ENCODE measurements at regions of chr11 and their contacts with region 1.

Region 1: DNA sequence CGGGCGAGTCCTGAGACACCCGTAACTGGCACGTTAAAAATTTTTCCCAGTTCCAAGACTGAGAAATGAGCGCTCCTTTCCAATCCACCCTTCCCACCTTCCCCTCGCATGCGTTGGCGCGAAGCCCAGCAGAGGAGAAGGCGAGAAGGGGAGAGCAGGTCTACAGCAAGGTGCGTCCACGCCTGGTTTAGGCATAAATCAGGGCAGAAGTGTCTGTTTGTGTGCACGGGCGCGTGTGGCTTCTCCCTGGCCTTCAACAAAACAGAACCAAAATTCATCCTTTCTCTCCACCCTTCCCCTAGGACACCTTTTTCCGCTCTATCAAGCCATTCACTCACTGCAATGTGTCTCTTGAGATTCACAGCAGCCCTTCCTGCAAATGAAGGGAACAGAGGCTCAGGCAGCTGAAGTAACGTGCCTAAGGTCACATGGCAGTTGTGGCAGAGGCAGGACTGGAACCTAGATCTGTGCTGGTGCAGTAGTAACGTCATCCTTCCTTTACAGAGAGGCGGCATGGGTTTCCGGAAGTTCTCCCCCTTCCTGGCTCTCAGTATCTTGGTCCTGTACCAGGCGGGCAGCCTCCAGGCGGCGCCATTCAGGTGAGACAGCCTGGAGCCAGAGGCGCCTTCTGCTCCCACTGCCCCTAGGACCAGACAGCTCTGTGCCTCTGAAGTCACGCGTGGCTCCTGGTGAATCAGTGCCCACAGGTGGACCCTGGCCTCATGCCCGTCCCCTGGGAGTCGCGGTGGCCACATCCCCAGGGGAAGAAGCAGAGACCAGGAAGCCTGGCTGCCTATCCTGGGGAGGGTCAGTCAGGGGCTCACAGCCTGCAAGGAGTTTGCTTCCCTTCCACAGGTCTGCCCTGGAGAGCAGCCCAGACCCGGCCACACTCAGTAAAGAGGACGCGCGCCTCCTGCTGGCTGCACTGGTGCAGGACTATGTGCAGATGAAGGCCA is 1.1 kb downstream of the CALCB start:
- DNase-seq: peak; percentile 69 to 89 (median 77)
- ATAC-seq: peak; percentile 90 to 95 (median 92)
- H3K4me3 ChIP-seq: peak overlapping the region; percentile 2 to 43 (median 33)
- H3K27ac ChIP-seq: no peak overlapping the region
- H3K4me1 ChIP-seq: peaks cover 0 to 21% (median 13%) of the 10 kb centered on the region in 12 donors
- H3K27me3 ChIP-seq: peaks cover 9 to 56% (median 33%) of the 10 kb centered on the region in 9 donors
- CTCF ChIP-seq: peak; percentile 56 to 79 (median 66)
- POLR2A ChIP-seq: no peak

Region 2: DNA sequence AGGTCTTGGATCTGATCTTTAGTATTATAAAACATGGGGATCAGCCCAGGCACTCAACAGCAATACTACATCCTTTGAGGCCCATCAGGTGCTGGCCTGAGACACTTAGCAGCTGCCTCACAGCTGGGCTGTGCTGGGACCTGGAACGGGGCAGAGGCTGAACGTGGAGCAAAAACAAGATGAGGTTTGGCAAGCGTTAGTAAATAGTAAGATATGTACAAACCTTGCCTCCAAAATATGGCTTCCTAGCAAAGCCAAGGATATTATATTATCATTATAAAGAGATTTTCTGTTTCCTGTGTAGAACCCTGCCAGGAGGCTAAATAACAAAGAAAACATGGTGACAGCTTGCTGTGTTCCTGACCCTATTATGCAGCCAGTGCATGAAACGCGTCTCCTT is 1172.0 kb before region 1 on chr11:
- intact Hi-C with region 1: no loop called
- DNase-seq: peak in 1 of 5 donors; percentile 31
- ATAC-seq: peak in 3 of 4 donors; percentile 50 to 73 (median 57)
- H3K4me3 ChIP-seq: no peak overlapping the region
- H3K27ac ChIP-seq: no peak overlapping the region
- H3K4me1 ChIP-seq: no peaks in the 10 kb centered on the region
- H3K27me3 ChIP-seq: no peaks in the 10 kb centered on the region
- CTCF ChIP-seq: no peak
- POLR2A ChIP-seq: no peak

Region 3: GRCh38 chr11:14529933-14530332 is 544.6 kb before region 1 on chr11:
- intact Hi-C with region 1: loop called in 5 of 10 experiments (anchors 5 to 10 kb)
- DNase-seq: no peak
- ATAC-seq: no peak
- H3K4me3 ChIP-seq: no peak overlapping the region
- H3K27ac ChIP-seq: no peak overlapping the region
- H3K4me1 ChIP-seq: no peaks in the 10 kb centered on the region
- H3K27me3 ChIP-seq: no peaks in the 10 kb centered on the region
- CTCF ChIP-seq: no peak
- POLR2A ChIP-seq: no peak

Region 4: DNA sequence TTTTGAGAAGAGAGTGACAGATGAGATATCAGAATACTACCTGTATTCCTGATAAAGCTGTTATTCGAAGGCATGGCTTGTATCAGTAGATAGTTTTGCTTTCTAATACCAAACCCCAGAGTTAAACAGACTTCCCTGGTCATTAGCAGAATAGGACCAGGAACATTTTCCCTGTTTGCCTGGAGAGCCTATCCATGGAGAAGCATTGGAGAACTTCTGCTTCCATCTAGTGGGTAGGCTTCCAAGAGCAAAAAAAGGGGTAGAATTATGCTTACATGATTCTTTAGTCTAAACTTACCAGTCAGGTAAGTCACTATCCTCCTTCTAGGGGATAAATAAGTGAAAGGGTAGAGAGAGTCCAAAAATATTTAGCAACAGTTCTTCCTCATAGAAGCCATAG is 416.6 kb before region 1 on chr11:
- intact Hi-C with region 1: no loop called
- DNase-seq: no peak
- ATAC-seq: peak in 1 of 4 donors; percentile 37
- H3K4me3 ChIP-seq: no peak overlapping the region
- H3K27ac ChIP-seq: peak overlapping the region in 1 of 12 donors; percentile 60
- H3K4me1 ChIP-seq: peaks cover 0 to 23% (median 3%) of the 10 kb centered on the region in 12 donors
- H3K27me3 ChIP-seq: no peaks in the 10 kb centered on the region
- CTCF ChIP-seq: peak in 2 of 12 donors; percentile 6 to 9
- POLR2A ChIP-seq: no peak

Region 5: GRCh38 chr11:14764579-14765527 is 309.6 kb before region 1 on chr11:
- intact Hi-C with region 1: no loop called
- DNase-seq: no peak
- ATAC-seq: no peak
- H3K4me3 ChIP-seq: no peak overlapping the region
- H3K27ac ChIP-seq: peak overlapping the region in 1 of 12 donors; percentile 40
- H3K4me1 ChIP-seq: peaks cover 0 to 5% (median 0%) of the 10 kb centered on the region in 12 donors
- H3K27me3 ChIP-seq: no peaks in the 10 kb centered on the region
- CTCF ChIP-seq: no peak
- POLR2A ChIP-seq: no peak

Region 6: DNA sequence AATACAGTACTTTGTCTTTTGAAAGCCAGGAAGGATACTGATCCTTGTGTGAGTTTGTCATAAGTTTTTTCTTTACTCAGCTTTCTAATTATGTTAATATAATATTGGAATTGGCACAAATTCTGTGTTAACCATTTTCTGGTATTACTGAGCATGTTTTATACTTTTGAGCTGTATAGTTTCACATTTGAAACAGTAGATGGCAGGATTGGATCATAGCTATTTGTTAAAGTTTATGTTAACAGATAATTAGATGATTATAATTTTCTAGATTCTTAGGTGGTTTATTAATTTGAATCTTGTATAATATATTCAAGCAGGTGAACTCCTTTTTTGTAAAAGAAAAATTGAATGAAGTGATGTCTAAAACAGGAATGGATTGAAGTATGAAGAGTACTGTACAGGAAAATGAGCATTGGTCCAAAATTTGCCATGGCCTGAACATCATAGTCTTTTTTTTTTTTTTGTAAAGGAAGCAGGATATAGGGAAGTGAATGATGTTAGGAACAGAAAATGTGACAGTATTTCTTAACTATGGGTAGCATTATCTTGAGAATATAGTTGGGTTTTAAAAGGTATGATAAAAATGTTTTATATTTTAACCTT is 284.5 kb before region 1 on chr11:
- intact Hi-C with region 1: loop called in 1 of 10 experiments (anchors 10 kb)
- DNase-seq: no peak
- ATAC-seq: no peak
- H3K4me3 ChIP-seq: no peak overlapping the region
- H3K27ac ChIP-seq: no peak overlapping the region
- H3K4me1 ChIP-seq: peaks cover 0 to 8% (median 0%) of the 10 kb centered on the region in 12 donors
- H3K27me3 ChIP-seq: no peaks in the 10 kb centered on the region
- CTCF ChIP-seq: peak; percentile 23 to 58 (median 36)
- POLR2A ChIP-seq: no peak

Region 7: GRCh38 chr11:14927146-14927545 is 147.3 kb before region 1 on chr11:
- intact Hi-C with region 1: loop called in 1 of 10 experiments (anchors 5 kb)
- DNase-seq: no peak
- ATAC-seq: no peak
- H3K4me3 ChIP-seq: no peak overlapping the region
- H3K27ac ChIP-seq: no peak overlapping the region
- H3K4me1 ChIP-seq: no peaks in the 10 kb centered on the region
- H3K27me3 ChIP-seq: peaks cover 0 to 8% (median 0%) of the 10 kb centered on the region in 9 donors
- CTCF ChIP-seq: no peak
- POLR2A ChIP-seq: no peak

Region 8: GRCh38 chr11:15199693-15200092 is 125.2 kb after region 1 on chr11:
- intact Hi-C with region 1: no loop called
- DNase-seq: peak in 4 of 5 donors; percentile 56 to 76 (median 64)
- ATAC-seq: peak; percentile 53 to 87 (median 76)
- H3K4me3 ChIP-seq: no peak overlapping the region
- H3K27ac ChIP-seq: no peak overlapping the region
- H3K4me1 ChIP-seq: peaks cover 0 to 8% (median 0%) of the 10 kb centered on the region in 12 donors
- H3K27me3 ChIP-seq: no peaks in the 10 kb centered on the region
- CTCF ChIP-seq: no peak
- POLR2A ChIP-seq: no peak

Measured in heart left ventricle (tissue), 16 donors.